Esophagus squamous epithelium (tissue), 5 donors: ENCODE measurements at regions of chr9 and their contacts with region 1.

Region 1: GRCh38 chr9:90881648-90882047 is 80.0 kb downstream of the SYK start:
- DNase-seq: no peak
- H3K4me3 ChIP-seq: no peak overlapping the region
- H3K27ac ChIP-seq: no peak overlapping the region
- H3K4me1 ChIP-seq: peaks cover 0 to 14% (median 0%) of the 10 kb centered on the region in 3 donors
- H3K27me3 ChIP-seq: no peaks in the 10 kb centered on the region
- CTCF ChIP-seq: no peak
- POLR2A ChIP-seq: no peak

Region 2: GRCh38 chr9:89695441-89695891 is 1186.2 kb before region 1 on chr9:
- intact Hi-C with region 1: loop called (anchors 5 kb)
- DNase-seq: no peak
- H3K4me3 ChIP-seq: no peak overlapping the region
- H3K27ac ChIP-seq: no peak overlapping the region
- H3K4me1 ChIP-seq: no peaks in the 10 kb centered on the region
- H3K27me3 ChIP-seq: no peaks in the 10 kb centered on the region
- CTCF ChIP-seq: no peak
- POLR2A ChIP-seq: no peak

Region 3: GRCh38 chr9:90735952-90736351 is 145.7 kb before region 1 on chr9:
- intact Hi-C with region 1: no loop called
- DNase-seq: no peak
- H3K4me3 ChIP-seq: no peak overlapping the region
- H3K27ac ChIP-seq: no peak overlapping the region
- H3K4me1 ChIP-seq: no peaks in the 10 kb centered on the region
- H3K27me3 ChIP-seq: no peaks in the 10 kb centered on the region
- CTCF ChIP-seq: no peak
- POLR2A ChIP-seq: no peak

Region 4: GRCh38 chr9:91315191-91315590 is 433.5 kb after region 1 on chr9:
- intact Hi-C with region 1: no loop called
- DNase-seq: no peak
- H3K4me3 ChIP-seq: no peak overlapping the region
- H3K27ac ChIP-seq: no peak overlapping the region
- H3K4me1 ChIP-seq: peaks cover 0 to 14% (median 4%) of the 10 kb centered on the region in 3 donors
- H3K27me3 ChIP-seq: no peaks in the 10 kb centered on the region
- CTCF ChIP-seq: no peak
- POLR2A ChIP-seq: no peak